ENCODE measurements at regions of chr2 and their contacts with region 1.

Region 1: GRCh38 chr2:227106845-227107759 is 56.9 kb downstream of the COL4A4 start:
- DNase-seq: peak; percentile 78
- H3K4me3 ChIP-seq: peak overlapping the region; percentile 62
- H3K27ac ChIP-seq: no peak overlapping the region
- H3K4me1 ChIP-seq: no peaks in the 10 kb centered on the region
- H3K27me3 ChIP-seq: no peaks in the 10 kb centered on the region

Region 2: GRCh38 chr2:225670111-225670974 is 1436.8 kb before region 1 on chr2:
- in situ Hi-C with region 1: loop called (anchors 10 kb)
- DNase-seq: peak; percentile 73
- H3K4me3 ChIP-seq: no peak overlapping the region
- H3K27ac ChIP-seq: no peak overlapping the region
- H3K4me1 ChIP-seq: no peaks in the 10 kb centered on the region
- H3K27me3 ChIP-seq: no peaks in the 10 kb centered on the region

Region 3: DNA sequence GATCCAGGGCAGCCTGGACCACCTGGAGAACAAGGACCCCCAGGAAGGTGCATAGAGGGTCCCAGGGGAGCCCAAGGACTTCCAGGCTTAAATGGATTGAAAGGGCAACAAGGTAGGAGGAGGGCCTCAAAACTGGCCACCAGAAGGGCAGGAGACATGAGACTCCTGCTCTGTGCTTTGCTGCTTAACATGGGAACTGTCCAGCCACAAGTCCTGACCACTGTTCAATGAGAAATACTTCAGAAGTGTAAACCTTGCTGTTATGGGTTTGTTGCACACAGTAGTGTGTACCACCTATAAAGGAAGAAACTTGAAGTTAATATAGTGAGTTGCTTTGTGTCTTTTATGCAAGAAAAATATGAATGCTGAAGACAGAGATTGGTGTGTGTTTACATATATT is 173.8 kb after region 1 on chr2:
- in situ Hi-C with region 1: no loop called
- DNase-seq: peak; percentile 18
- H3K4me3 ChIP-seq: no peak overlapping the region
- H3K27ac ChIP-seq: no peak overlapping the region
- H3K4me1 ChIP-seq: no peaks in the 10 kb centered on the region
- H3K27me3 ChIP-seq: no peaks in the 10 kb centered on the region

Region 4: DNA sequence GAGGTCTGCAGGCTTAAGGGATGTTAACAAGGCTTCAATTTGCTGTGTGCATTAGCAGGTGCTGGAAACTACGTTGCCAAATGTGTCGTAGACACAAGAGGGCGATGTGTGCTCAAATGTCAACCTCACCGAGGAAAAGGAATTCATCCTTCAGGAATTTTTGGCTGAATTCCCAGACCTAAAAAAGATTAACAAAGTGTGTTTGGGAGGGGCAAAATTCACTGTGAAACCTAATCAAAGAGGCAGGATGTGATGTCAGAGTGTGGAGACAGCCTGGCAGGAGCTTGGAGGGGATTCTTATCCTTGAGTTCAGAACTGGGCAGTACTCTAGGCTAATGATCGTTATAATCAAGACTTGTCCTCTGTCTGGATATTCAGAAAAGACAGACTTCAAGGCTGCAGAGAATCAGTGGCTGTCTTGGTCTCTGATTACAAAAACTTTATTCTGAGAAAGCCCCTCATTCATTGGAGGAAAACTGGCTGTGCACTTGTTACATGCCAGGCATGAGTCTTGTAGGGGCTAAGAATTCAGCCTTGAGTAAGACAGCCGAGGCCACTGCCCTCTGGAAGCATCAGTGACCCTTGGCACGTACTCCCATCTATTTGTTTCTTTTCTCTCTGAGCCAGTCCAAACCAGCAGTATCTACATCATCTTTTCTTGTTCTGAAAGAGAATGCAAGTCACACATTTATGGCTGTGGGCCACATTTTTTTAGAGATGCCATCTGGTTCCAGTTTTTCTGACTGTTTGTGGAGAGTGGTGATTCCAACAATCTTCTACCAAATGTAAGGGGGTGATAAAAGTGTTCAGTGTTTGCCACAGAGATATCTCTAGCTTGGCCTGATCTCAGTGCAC is 299.3 kb after region 1 on chr2:
- in situ Hi-C with region 1: no loop called
- DNase-seq: peak; percentile 98
- H3K4me3 ChIP-seq: peak overlapping the region; percentile 50
- H3K27ac ChIP-seq: peak overlapping the region; percentile 98
- H3K4me1 ChIP-seq: peaks cover 30% of the 10 kb centered on the region
- H3K27me3 ChIP-seq: no peaks in the 10 kb centered on the region

Measured in GM23248 (cell line).